Dendritic cell treated with granulocyte-macrophage colony-stimulating factor and Interleukin-4, amounts not matched to agents 40 ng/mL and 50 ng/mL, for 4 days (primary cell): ENCODE measurements at regions of chr3 and their contacts with region 1.

Region 1: GRCh38 chr3:136075218-136075808 is 109.8 kb downstream of the PPP2R3A start:
- H3K4me3 Mint-ChIP-seq: peak overlapping the region; percentile 32
- H3K27ac Mint-ChIP-seq: peak overlapping the region; percentile 70
- H3K4me1 Mint-ChIP-seq: peaks cover 26% of the 10 kb centered on the region
- H3K27me3 Mint-ChIP-seq: no peaks in the 10 kb centered on the region

Region 2: GRCh38 chr3:135516143-135516542 is 559.2 kb before region 1 on chr3:
- intact Hi-C with region 1: no loop called
- H3K4me3 Mint-ChIP-seq: no peak overlapping the region
- H3K27ac Mint-ChIP-seq: no peak overlapping the region
- H3K4me1 Mint-ChIP-seq: peaks cover 7% of the 10 kb centered on the region
- H3K27me3 Mint-ChIP-seq: no peaks in the 10 kb centered on the region

Region 3: GRCh38 chr3:135992072-135992471 is 83.2 kb before region 1 on chr3:
- intact Hi-C with region 1: no loop called
- H3K4me3 Mint-ChIP-seq: no peak overlapping the region
- H3K27ac Mint-ChIP-seq: no peak overlapping the region
- H3K4me1 Mint-ChIP-seq: no peaks in the 10 kb centered on the region
- H3K27me3 Mint-ChIP-seq: no peaks in the 10 kb centered on the region

Region 4: GRCh38 chr3:136250226-136250902 is 175.1 kb after region 1 on chr3 and contains the start of gene PCCB:
- intact Hi-C with region 1: loop called (anchors 5 kb)
- H3K4me3 Mint-ChIP-seq: peak within 1 kb of the TSS; percentile 86
- H3K27ac Mint-ChIP-seq: peak within 1 kb of the TSS; percentile 96
- H3K4me1 Mint-ChIP-seq: peaks cover 21% of the 10 kb centered on the region
- H3K27me3 Mint-ChIP-seq: no peaks in the 10 kb centered on the region

Region 5: DNA sequence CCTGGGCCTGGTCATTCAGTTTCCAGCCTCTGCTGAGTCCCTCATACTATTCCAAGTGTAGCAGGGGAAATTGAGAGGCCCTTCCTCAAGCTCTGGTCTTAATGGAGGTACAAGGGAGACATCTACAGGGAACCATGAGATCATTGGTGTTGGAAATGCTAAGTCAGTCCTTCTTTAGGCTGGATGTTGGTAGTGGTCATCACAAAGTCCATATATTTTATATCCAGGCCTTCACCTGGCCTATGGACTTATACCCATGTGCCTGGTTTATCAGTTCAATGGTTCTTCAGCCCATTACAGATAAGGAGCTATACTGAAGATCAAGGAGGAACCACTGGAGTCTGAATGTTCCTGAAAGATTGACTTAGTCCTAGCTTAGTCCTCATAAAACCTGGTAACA is 541.9 kb after region 1 on chr3:
- intact Hi-C with region 1: loop called (anchors 10 kb)
- H3K4me3 Mint-ChIP-seq: no peak overlapping the region
- H3K27ac Mint-ChIP-seq: peak overlapping the region; percentile 89
- H3K4me1 Mint-ChIP-seq: peaks cover 41% of the 10 kb centered on the region
- H3K27me3 Mint-ChIP-seq: no peaks in the 10 kb centered on the region

Region 6: GRCh38 chr3:137013955-137014688 is 938.8 kb after region 1 on chr3:
- intact Hi-C with region 1: loop called (anchors 2 kb)
- H3K4me3 Mint-ChIP-seq: peak overlapping the region; percentile 77
- H3K27ac Mint-ChIP-seq: peak overlapping the region; percentile 65
- H3K4me1 Mint-ChIP-seq: peaks cover 13% of the 10 kb centered on the region
- H3K27me3 Mint-ChIP-seq: peaks cover 2% of the 10 kb centered on the region

Region 7: GRCh38 chr3:137946345-137946973 is 1871.1 kb after region 1 on chr3:
- intact Hi-C with region 1: loop called (anchors 10 kb)
- H3K4me3 Mint-ChIP-seq: no peak overlapping the region
- H3K27ac Mint-ChIP-seq: no peak overlapping the region
- H3K4me1 Mint-ChIP-seq: no peaks in the 10 kb centered on the region
- H3K27me3 Mint-ChIP-seq: no peaks in the 10 kb centered on the region